CD8-positive, alpha-beta T cell (primary cell): ENCODE measurements at regions of chr3 and their contacts with region 1.

Region 1: DNA sequence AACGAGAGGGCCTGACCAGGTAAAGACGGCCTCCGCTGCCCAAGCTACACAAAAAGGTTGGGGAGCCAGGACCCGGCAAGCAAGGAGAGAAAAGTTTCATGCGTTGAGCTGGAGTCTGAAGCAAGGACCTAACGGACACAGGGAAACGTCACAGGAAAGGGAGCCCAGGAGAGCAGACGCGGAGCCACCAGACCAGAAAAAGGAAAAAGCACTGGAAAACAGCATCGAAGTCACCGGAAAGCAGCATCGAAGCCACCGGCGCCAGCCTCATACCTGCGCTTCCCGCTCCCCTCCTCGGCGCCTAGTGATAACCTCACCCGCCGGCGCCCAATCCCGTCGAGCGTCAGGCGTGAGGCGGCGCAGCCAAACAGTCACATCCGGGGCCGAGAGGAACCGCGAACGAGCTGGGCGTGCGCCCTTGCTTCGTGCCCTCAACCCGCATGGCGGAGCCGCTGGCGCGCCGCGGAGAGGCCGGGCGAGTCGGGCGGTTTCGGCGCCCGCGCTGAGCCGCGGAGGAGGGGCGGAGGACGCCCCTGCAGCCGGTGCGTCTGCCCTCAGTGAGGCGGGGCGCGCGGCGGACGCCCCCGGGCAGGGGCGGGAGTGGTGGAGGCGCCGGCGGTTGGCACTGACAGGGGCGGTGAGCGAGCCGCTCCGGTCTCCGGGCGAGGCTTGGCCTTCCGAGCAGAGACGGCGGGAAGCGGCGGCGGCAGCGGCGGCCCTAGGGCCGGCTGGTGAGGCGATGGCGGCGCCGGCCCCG is at the starts of genes FBXO45 and WDR53:
- DNase-seq: peak; percentile 88 to 98 (median 95)
- ATAC-seq: peak; percentile 92
- H3K4me3 ChIP-seq: peak within 1 kb of the TSS; percentile 80
- H3K4me3 Mint-ChIP-seq: peak within 1 kb of the TSS; percentile 99
- H3K27ac ChIP-seq: peak within 1 kb of the TSS; percentile 86 to 91
- H3K27ac Mint-ChIP-seq: peak within 1 kb of the TSS; percentile 98
- H3K4me1 ChIP-seq: peaks cover 26% of the 10 kb centered on the region
- H3K4me1 Mint-ChIP-seq: peaks cover 43% of the 10 kb centered on the region
- H3K27me3 ChIP-seq: no peaks in the 10 kb centered on the region
- H3K27me3 Mint-ChIP-seq: no peaks in the 10 kb centered on the region
- CTCF ChIP-seq: no peak
- total RNA-seq, gene FBXO45: 7.8 to 9.3 TPM
- total RNA-seq, gene WDR53: 15.7 to 17.5 TPM

Region 2: DNA sequence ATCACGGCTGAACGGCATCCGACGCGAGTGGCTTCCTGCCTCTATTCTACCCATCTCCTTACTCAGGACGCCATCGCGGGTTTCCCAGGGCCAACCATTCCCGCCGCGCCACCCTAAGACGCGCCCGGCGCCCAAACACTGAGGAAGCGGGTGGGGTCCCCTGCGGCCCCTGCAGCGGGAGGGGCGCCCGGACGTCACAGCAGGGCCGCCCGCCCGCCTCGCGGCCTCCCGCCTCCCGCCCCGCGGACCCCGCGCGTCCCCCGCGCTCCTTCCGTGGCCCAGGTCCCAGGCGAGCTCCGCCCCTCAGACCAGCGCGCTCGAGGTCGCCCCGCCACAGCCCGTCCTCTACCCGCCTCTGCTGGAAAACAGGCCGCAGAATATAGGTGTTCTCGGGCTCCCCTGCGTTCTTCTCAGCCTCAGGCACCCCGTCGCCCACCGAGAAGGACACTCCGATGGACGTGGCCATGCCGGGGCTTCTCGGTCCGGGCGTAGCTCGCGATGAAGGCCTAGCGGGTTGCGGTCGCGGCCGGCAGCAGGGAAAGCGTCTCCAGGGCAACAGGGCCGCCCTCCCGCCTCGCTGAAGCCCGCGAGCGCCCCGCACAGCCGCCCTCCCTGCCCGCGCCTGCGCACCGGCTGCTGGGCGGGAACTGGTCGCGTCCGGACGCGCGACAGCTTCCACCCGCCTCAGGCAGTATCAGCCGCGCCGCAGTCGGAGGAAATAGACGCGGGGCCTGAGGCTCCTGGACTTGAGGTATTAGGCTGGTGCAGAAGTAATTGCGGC is 250.5 kb before region 1 on chr3 and contains the start of gene DYNLT2B:
- CTCF ChIA-PET with region 1: no interaction called
- POLR2A ChIA-PET with region 1: interaction called, 3 read pairs
- intact Hi-C with region 1: loop called (anchors 2 kb)
- DNase-seq: peak; percentile 73 to 95 (median 84)
- ATAC-seq: peak; percentile 90
- H3K4me3 ChIP-seq: peak within 1 kb of the TSS; percentile 79 to 81
- H3K4me3 Mint-ChIP-seq: peak within 1 kb of the TSS; percentile 92
- H3K27ac ChIP-seq: peak within 1 kb of the TSS; percentile 87 to 89
- H3K27ac Mint-ChIP-seq: peak within 1 kb of the TSS; percentile 96
- H3K4me1 ChIP-seq: no peaks in the 10 kb centered on the region
- H3K4me1 Mint-ChIP-seq: peaks cover 15% of the 10 kb centered on the region
- H3K27me3 ChIP-seq: no peaks in the 10 kb centered on the region
- H3K27me3 Mint-ChIP-seq: no peaks in the 10 kb centered on the region
- CTCF ChIP-seq: no peak
- total RNA-seq, gene DYNLT2B: 1.1 to 3.0 TPM

Region 3: GRCh38 chr3:196596355-196596754 is 27.9 kb after region 1 on chr3:
- CTCF ChIA-PET with region 1: no interaction called
- POLR2A ChIA-PET with region 1: interaction called, 16 read pairs
- intact Hi-C with region 1: loop called in 1 of 2 experiments (anchors 2 kb)
- DNase-seq: no peak
- ATAC-seq: no peak
- H3K4me3 ChIP-seq: no peak overlapping the region
- H3K4me3 Mint-ChIP-seq: no peak overlapping the region
- H3K27ac ChIP-seq: no peak overlapping the region
- H3K27ac Mint-ChIP-seq: no peak overlapping the region
- H3K4me1 ChIP-seq: peaks cover 4% of the 10 kb centered on the region
- H3K4me1 Mint-ChIP-seq: peaks cover 21% of the 10 kb centered on the region
- H3K27me3 ChIP-seq: no peaks in the 10 kb centered on the region
- H3K27me3 Mint-ChIP-seq: no peaks in the 10 kb centered on the region
- CTCF ChIP-seq: no peak

Region 4: GRCh38 chr3:196620161-196620604 is 51.8 kb after region 1 on chr3:
- CTCF ChIA-PET with region 1: no interaction called
- POLR2A ChIA-PET with region 1: no interaction called
- intact Hi-C with region 1: no loop called
- DNase-seq: peak in 2 of 9 experiments; percentile 46 to 60
- ATAC-seq: peak; percentile 64
- H3K4me3 ChIP-seq: no peak overlapping the region
- H3K4me3 Mint-ChIP-seq: no peak overlapping the region
- H3K27ac ChIP-seq: no peak overlapping the region
- H3K27ac Mint-ChIP-seq: peak overlapping the region; percentile 1
- H3K4me1 ChIP-seq: peaks cover 7% of the 10 kb centered on the region
- H3K4me1 Mint-ChIP-seq: peaks cover 24% of the 10 kb centered on the region
- H3K27me3 ChIP-seq: no peaks in the 10 kb centered on the region
- H3K27me3 Mint-ChIP-seq: no peaks in the 10 kb centered on the region
- CTCF ChIP-seq: no peak

Region 5: GRCh38 chr3:196632046-196632751 is 63.8 kb after region 1 on chr3:
- CTCF ChIA-PET with region 1: no interaction called
- POLR2A ChIA-PET with region 1: interaction called, 3 read pairs
- intact Hi-C with region 1: loop called (anchors 2 kb)
- DNase-seq: peak; percentile 70 to 96 (median 89)
- ATAC-seq: peak; percentile 79
- H3K4me3 ChIP-seq: peak overlapping the region; percentile 46 to 50
- H3K4me3 Mint-ChIP-seq: peak overlapping the region; percentile 80
- H3K27ac ChIP-seq: peak overlapping the region; percentile 56 to 80
- H3K27ac Mint-ChIP-seq: peak overlapping the region; percentile 93
- H3K4me1 ChIP-seq: peaks cover 36% of the 10 kb centered on the region
- H3K4me1 Mint-ChIP-seq: peaks cover 51% of the 10 kb centered on the region
- H3K27me3 ChIP-seq: no peaks in the 10 kb centered on the region
- H3K27me3 Mint-ChIP-seq: no peaks in the 10 kb centered on the region
- CTCF ChIP-seq: no peak

Region 6: DNA sequence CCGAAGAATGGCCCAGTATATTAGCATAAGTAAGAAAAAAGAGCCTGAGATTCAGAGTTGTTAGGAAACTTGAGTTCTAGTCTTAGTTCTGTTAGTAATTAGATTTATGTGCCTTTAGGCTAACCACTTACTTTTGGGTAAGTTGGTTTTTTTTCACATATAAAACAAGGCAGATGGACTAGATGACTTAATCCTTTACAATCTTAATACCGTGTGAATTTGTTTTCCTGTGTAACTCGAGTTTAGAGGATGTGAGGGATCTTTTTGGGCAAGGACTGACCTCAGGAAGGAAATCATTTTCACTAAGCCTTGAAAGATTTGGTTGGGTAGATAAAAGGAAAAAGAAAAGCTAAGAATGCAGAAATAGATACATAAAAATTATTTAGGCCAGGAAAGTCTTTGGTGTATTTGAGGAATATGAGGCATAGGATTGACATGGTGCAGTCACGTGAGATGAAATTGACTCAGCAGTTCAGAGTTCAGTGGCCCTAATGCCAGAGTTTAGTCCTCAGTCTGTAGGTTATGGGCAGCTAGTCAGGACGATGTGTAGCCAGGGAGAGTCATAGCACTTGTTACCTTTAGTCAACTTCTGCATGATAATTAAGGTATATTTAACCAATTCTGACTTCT is 205.9 kb after region 1 on chr3:
- CTCF ChIA-PET with region 1: no interaction called
- POLR2A ChIA-PET with region 1: no interaction called
- intact Hi-C with region 1: no loop called
- DNase-seq: no peak
- ATAC-seq: no peak
- H3K4me3 ChIP-seq: no peak overlapping the region
- H3K4me3 Mint-ChIP-seq: no peak overlapping the region
- H3K27ac ChIP-seq: peak overlapping the region in 1 of 2 experiments; percentile 26
- H3K27ac Mint-ChIP-seq: peak overlapping the region; percentile 66
- H3K4me1 ChIP-seq: peaks cover 38% of the 10 kb centered on the region
- H3K4me1 Mint-ChIP-seq: peaks cover 82% of the 10 kb centered on the region
- H3K27me3 ChIP-seq: no peaks in the 10 kb centered on the region
- H3K27me3 Mint-ChIP-seq: no peaks in the 10 kb centered on the region
- CTCF ChIP-seq: no peak

Region 7: DNA sequence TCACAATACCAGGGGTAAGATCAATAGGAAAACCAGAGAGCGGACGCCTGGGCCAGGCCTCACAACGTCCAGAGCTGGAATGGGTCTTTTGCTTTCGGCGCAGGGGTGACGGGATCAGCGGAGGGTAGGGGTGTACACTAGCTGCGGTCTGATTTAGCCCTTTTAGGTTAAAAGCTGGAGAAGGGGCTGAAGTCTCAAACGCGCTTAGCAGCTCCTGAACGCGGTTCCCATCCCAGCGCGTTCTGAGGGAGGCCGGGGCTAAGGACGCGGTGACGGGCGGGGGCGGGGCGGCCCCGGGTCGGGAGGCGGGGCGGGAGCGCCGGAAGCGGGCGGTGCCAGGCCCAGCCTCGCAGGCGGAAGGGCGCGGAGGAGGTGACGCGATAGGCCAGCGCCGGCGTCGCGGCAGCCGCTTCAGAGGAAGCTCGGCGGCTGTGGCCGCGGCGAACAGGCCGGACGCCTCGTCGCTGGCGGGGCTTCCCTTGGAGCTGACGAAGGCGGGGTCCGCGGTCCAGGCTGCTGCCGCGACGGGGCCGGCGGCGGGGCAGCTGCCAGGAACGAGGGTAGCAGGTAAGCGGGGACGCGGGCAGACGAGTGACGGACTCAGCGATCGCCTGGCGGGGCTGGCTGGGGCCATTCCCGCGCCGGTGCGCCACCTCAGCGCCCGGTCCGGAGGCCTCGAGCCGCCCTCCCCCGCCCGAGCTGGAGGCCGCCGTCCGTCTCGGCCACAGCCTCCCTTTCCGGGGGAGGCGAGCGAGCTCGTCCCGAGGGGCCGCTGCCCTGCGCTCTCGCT is 299.3 kb after region 1 on chr3 and contains the start of gene SENP5:
- CTCF ChIA-PET with region 1: no interaction called
- POLR2A ChIA-PET with region 1: interaction called, 3 read pairs
- intact Hi-C with region 1: loop called in 1 of 2 experiments (anchors 1 kb)
- DNase-seq: peak; percentile 74 to 95 (median 87)
- ATAC-seq: peak; percentile 97
- H3K4me3 ChIP-seq: peak within 1 kb of the TSS; percentile 70 to 82
- H3K4me3 Mint-ChIP-seq: peak within 1 kb of the TSS; percentile 97
- H3K27ac ChIP-seq: peak within 1 kb of the TSS; percentile 92 to 94
- H3K27ac Mint-ChIP-seq: peak within 1 kb of the TSS; percentile 94
- H3K4me1 ChIP-seq: peaks cover 23% of the 10 kb centered on the region
- H3K4me1 Mint-ChIP-seq: peaks cover 28% of the 10 kb centered on the region
- H3K27me3 ChIP-seq: no peaks in the 10 kb centered on the region
- H3K27me3 Mint-ChIP-seq: no peaks in the 10 kb centered on the region
- CTCF ChIP-seq: no peak
- total RNA-seq, gene SENP5: 75.4 to 77.7 TPM